CD8-positive, alpha-beta T cell (primary cell): ENCODE measurements at regions of chr1 and their contacts with region 1.

Region 1: GRCh38 chr1:161117759-161118581 is at the starts of genes NIT1 and PFDN2:
- DNase-seq: peak; percentile 67 to 93 (median 84)
- ATAC-seq: peak; percentile 72
- H3K4me3 ChIP-seq: peak within 1 kb of the TSS; percentile 95 to 96
- H3K4me3 Mint-ChIP-seq: peak within 1 kb of the TSS; percentile 93
- H3K27ac ChIP-seq: peak within 1 kb of the TSS; percentile 91 to 93
- H3K27ac Mint-ChIP-seq: peak within 1 kb of the TSS; percentile 95
- H3K4me1 ChIP-seq: peaks cover 43% of the 10 kb centered on the region
- H3K4me1 Mint-ChIP-seq: peaks cover 60% of the 10 kb centered on the region
- H3K27me3 ChIP-seq: no peaks in the 10 kb centered on the region
- H3K27me3 Mint-ChIP-seq: no peaks in the 10 kb centered on the region
- CTCF ChIP-seq: no peak
- total RNA-seq, gene NIT1: 11.5 to 12.8 TPM
- total RNA-seq, gene PFDN2: 64.7 to 75.5 TPM

Region 2: GRCh38 chr1:160844447-160845232 is 273.3 kb before region 1 on chr1:
- CTCF ChIA-PET with region 1: no interaction called
- POLR2A ChIA-PET with region 1: no interaction called
- intact Hi-C with region 1: no loop called
- DNase-seq: peak in 2 of 9 experiments; percentile 27 to 33
- ATAC-seq: no peak
- H3K4me3 ChIP-seq: no peak overlapping the region
- H3K4me3 Mint-ChIP-seq: no peak overlapping the region
- H3K27ac ChIP-seq: no peak overlapping the region
- H3K27ac Mint-ChIP-seq: no peak overlapping the region
- H3K4me1 ChIP-seq: peaks cover 21% of the 10 kb centered on the region
- H3K4me1 Mint-ChIP-seq: peaks cover 49% of the 10 kb centered on the region
- H3K27me3 ChIP-seq: no peaks in the 10 kb centered on the region
- H3K27me3 Mint-ChIP-seq: no peaks in the 10 kb centered on the region
- CTCF ChIP-seq: no peak

Region 3: GRCh38 chr1:161021165-161021960 is 96.6 kb before region 1 on chr1:
- CTCF ChIA-PET with region 1: no interaction called
- POLR2A ChIA-PET with region 1: interaction called, 9 read pairs
- intact Hi-C with region 1: loop called in 1 of 2 experiments (anchors 5 kb)
- DNase-seq: peak; percentile 75 to 95 (median 89)
- ATAC-seq: peak; percentile 94
- H3K4me3 ChIP-seq: peak overlapping the region; percentile 51 to 89
- H3K4me3 Mint-ChIP-seq: peak overlapping the region; percentile 93
- H3K27ac ChIP-seq: peak overlapping the region; percentile 22 to 73
- H3K27ac Mint-ChIP-seq: peak overlapping the region; percentile 83
- H3K4me1 ChIP-seq: peaks cover 14% of the 10 kb centered on the region
- H3K4me1 Mint-ChIP-seq: peaks cover 37% of the 10 kb centered on the region
- H3K27me3 ChIP-seq: no peaks in the 10 kb centered on the region
- H3K27me3 Mint-ChIP-seq: no peaks in the 10 kb centered on the region
- CTCF ChIP-seq: no peak

Region 4: GRCh38 chr1:161038523-161039153 is 79.3 kb before region 1 on chr1 and contains the start of gene TSTD1:
- CTCF ChIA-PET with region 1: no interaction called
- POLR2A ChIA-PET with region 1: interaction called, 4 read pairs
- intact Hi-C with region 1: loop called in 1 of 2 experiments (anchors 2 kb)
- DNase-seq: peak; percentile 68 to 95 (median 86)
- ATAC-seq: peak; percentile 88
- H3K4me3 ChIP-seq: peak within 1 kb of the TSS; percentile 87 to 89
- H3K4me3 Mint-ChIP-seq: peak within 1 kb of the TSS; percentile 90
- H3K27ac ChIP-seq: peak within 1 kb of the TSS; percentile 75 to 83
- H3K27ac Mint-ChIP-seq: peak within 1 kb of the TSS; percentile 96
- H3K4me1 ChIP-seq: peaks cover 35% of the 10 kb centered on the region
- H3K4me1 Mint-ChIP-seq: peaks cover 56% of the 10 kb centered on the region
- H3K27me3 ChIP-seq: no peaks in the 10 kb centered on the region
- H3K27me3 Mint-ChIP-seq: no peaks in the 10 kb centered on the region
- CTCF ChIP-seq: no peak
- total RNA-seq, gene TSTD1: 44.8 to 46.6 TPM

Region 5: DNA sequence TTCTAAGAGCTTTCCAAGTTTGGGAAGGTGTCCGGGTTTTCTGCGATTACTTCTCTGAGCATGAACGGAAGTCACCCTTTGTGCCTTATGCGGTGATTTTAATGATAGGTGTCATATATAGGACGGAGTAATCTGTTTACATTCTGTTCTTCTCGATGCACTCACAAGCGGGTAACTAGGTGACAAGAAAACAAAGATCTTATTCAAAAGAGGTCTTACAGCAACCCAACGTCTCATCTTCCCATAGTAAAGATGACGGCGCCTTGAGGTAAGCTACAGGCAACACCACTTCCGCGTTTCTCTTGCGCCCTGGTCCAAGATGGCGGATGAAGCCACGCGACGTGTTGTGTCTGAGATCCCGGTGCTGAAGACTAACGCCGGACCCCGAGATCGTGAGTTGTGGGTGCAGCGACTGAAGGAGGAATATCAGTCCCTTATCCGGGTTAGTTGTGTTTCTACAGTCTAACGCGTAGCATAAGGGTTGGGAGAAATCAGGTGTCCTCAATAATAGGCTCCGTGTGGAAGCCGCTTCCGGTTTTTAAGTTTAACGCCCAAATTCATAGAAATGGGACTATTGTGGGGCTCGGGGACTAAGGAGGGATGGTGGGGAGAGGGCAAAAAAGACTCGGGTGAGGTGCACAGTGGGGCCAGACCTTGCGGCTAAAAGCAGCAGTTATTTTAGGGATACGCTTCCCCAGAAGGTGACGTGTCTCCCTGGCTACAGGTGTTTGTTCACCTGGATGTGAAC is 35.9 kb after region 1 on chr1 and contains the start of gene UFC1:
- CTCF ChIA-PET with region 1: interaction called, 3 read pairs
- POLR2A ChIA-PET with region 1: interaction called, 5 read pairs
- intact Hi-C with region 1: loop called (anchors 1 kb)
- DNase-seq: peak; percentile 66 to 96 (median 78)
- ATAC-seq: peak; percentile 92
- H3K4me3 ChIP-seq: peak within 1 kb of the TSS; percentile 95 to 98
- H3K4me3 Mint-ChIP-seq: peak within 1 kb of the TSS; percentile 96
- H3K27ac ChIP-seq: peak within 1 kb of the TSS; percentile 98 to 99
- H3K27ac Mint-ChIP-seq: peak within 1 kb of the TSS; percentile 100
- H3K4me1 ChIP-seq: peaks cover 17% of the 10 kb centered on the region
- H3K4me1 Mint-ChIP-seq: peaks cover 30% of the 10 kb centered on the region
- H3K27me3 ChIP-seq: no peaks in the 10 kb centered on the region
- H3K27me3 Mint-ChIP-seq: no peaks in the 10 kb centered on the region
- CTCF ChIP-seq: no peak
- total RNA-seq, gene UFC1: 94.7 to 96.6 TPM

Region 6: GRCh38 chr1:161399257-161399998 is 281.5 kb after region 1 on chr1:
- CTCF ChIA-PET with region 1: no interaction called
- POLR2A ChIA-PET with region 1: no interaction called
- intact Hi-C with region 1: no loop called
- DNase-seq: peak; percentile 84 to 97 (median 95)
- ATAC-seq: peak; percentile 83
- H3K4me3 ChIP-seq: peak overlapping the region; percentile 81 to 87
- H3K4me3 Mint-ChIP-seq: peak overlapping the region; percentile 96
- H3K27ac ChIP-seq: peak overlapping the region; percentile 96 to 98
- H3K27ac Mint-ChIP-seq: peak overlapping the region; percentile 98
- H3K4me1 ChIP-seq: peaks cover 19% of the 10 kb centered on the region
- H3K4me1 Mint-ChIP-seq: peaks cover 28% of the 10 kb centered on the region
- H3K27me3 ChIP-seq: no peaks in the 10 kb centered on the region
- H3K27me3 Mint-ChIP-seq: no peaks in the 10 kb centered on the region
- CTCF ChIP-seq: peak; percentile 88